ENCODE measurements at regions of chr1 and their contacts with region 1.

Region 1: GRCh38 chr1:27116697-27117096 is 38.2 kb downstream of the SLC9A1 start:
- DNase-seq: no peak
- H3K4me3 ChIP-seq: no peak overlapping the region
- H3K27ac ChIP-seq: peak overlapping the region; percentile 85 to 91
- H3K4me1 ChIP-seq: peaks cover 0 to 69% (median 56%) of the 10 kb centered on the region in 4 donors
- H3K27me3 ChIP-seq: no peaks in the 10 kb centered on the region
- CTCF ChIP-seq: no peak

Region 2: DNA sequence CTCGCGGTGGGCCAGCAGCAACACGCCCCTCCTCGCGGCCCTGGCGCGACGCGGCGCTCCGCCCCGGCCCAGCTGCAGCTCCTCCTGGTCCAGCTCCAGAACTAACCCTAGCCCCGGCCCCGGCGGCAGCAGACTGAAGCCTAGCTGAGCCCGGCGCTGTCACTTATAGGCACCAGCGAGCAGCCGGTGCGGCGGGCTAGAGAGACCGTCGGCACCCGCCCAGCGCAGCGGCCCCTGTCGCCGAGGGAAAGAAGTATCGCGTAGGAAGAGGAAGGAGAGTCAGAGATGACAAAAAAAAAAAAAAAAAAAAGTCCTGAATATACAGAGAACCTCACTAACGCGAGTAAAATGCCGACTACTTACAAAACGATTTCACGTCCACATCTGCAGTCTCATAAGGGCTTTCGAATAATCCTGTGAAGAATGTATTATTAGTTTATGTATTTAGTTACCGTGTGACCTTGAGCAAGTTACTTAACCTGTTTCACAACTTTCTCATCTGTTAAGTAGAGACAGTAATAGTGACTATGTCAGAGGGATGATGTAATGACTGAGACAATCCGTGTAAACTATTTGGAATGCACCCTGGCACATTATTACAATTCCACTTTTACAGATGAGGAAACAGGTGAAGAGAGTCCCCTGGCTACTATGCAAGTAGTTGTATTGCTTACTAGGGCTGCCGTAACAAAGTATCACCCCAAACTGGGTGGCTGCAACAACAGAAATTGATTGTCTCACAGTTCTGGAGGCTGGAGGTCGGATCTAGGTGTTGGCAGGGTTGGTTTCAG is 38.5 kb after region 1 on chr1 and contains the start of gene SLC9A1:
- intact Hi-C with region 1: loop called (anchors 5 kb)
- DNase-seq: peak; percentile 94 to 97
- H3K4me3 ChIP-seq: peak within 1 kb of the TSS; percentile 61 to 75
- H3K27ac ChIP-seq: peak within 1 kb of the TSS; percentile 79 to 88
- H3K4me1 ChIP-seq: peaks cover 0 to 48% (median 34%) of the 10 kb centered on the region in 4 donors
- H3K27me3 ChIP-seq: no peaks in the 10 kb centered on the region
- CTCF ChIP-seq: peak; percentile 73 to 76

Measured in tibial artery (tissue), 4 donors.